ENCODE measurements at regions of chr12 and their contacts with region 1.

Region 1: DNA sequence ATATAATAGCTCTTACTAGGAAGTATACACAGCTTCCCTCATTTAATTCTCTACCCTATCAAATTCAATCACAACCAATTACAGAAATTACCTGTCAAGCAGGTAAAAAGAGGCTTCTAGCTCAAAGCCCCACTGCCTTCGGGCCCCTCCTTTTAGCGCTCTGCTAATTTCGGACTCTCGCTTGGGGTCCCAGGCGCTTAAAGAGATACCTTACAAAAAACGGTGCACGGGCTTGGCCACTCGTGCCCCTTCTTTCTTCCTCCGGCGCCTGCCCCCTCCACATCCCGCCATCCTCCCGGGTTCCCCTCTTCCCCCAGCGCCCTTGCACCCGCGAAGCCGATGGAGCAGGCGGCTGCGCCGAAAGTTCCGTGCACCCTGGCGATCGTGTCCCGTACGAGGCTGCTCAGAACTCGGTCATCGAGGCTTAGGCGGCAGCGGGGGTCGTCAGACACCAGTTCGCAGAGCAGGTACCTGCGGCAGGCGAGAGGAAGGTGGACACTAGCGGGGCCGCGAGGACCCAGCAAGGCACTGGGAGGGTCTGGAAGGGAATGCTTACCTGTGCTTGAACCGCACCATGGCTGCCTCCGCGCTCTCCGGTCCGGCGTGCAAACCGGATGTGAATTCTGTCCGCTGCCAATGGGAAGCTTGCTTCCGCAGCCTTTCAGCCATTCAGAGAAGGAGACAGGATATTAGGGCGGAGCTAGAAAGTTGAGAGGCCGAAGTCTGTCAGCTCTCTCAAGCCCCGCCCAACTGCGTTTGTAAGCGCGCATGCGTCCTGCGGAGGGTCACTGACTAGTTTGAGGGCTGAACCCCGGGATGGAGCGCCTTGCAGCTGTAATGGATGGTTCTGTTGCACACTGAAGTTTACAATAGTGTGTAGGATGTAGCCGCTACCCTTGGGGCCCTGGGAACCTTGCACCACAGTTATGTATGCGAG is at the start of gene POP5:
- DNase-seq: peak; percentile 96
- ATAC-seq: peak; percentile 97
- H3K4me3 ChIP-seq: peak within 1 kb of the TSS; percentile 58 to 99 (median 96)
- H3K4me3 Mint-ChIP-seq: peak within 1 kb of the TSS; percentile 98
- H3K27ac ChIP-seq: peak within 1 kb of the TSS; percentile 47 to 70
- H3K27ac Mint-ChIP-seq: peak within 1 kb of the TSS; percentile 93
- H3K4me1 ChIP-seq: peaks cover 28 to 37% of the 10 kb centered on the region in 2 donors
- H3K4me1 Mint-ChIP-seq: peaks cover 40% of the 10 kb centered on the region
- H3K27me3 ChIP-seq: peaks cover 0 to 24% (median 9%) of the 10 kb centered on the region in 4 experiments
- H3K27me3 Mint-ChIP-seq: peaks cover 10% of the 10 kb centered on the region
- CTCF ChIP-seq: no peak
- total RNA-seq, gene POP5: 60.6 and 61.4 TPM in 2 replicates

Region 2: GRCh38 chr12:119208622-119209061 is 1372.4 kb before region 1 on chr12:
- CTCF ChIA-PET with region 1: no interaction called
- POLR2A ChIA-PET with region 1: no interaction called
- intact Hi-C with region 1: no loop called
- DNase-seq: peak; percentile 3
- ATAC-seq: no peak
- H3K4me3 ChIP-seq: no peak overlapping the region
- H3K4me3 Mint-ChIP-seq: no peak overlapping the region
- H3K27ac ChIP-seq: no peak overlapping the region
- H3K27ac Mint-ChIP-seq: no peak overlapping the region
- H3K4me1 ChIP-seq: no peaks in the 10 kb centered on the region
- H3K4me1 Mint-ChIP-seq: no peaks in the 10 kb centered on the region
- H3K27me3 ChIP-seq: no peaks in the 10 kb centered on the region
- H3K27me3 Mint-ChIP-seq: peaks cover 3% of the 10 kb centered on the region
- CTCF ChIP-seq: no peak

Region 3: DNA sequence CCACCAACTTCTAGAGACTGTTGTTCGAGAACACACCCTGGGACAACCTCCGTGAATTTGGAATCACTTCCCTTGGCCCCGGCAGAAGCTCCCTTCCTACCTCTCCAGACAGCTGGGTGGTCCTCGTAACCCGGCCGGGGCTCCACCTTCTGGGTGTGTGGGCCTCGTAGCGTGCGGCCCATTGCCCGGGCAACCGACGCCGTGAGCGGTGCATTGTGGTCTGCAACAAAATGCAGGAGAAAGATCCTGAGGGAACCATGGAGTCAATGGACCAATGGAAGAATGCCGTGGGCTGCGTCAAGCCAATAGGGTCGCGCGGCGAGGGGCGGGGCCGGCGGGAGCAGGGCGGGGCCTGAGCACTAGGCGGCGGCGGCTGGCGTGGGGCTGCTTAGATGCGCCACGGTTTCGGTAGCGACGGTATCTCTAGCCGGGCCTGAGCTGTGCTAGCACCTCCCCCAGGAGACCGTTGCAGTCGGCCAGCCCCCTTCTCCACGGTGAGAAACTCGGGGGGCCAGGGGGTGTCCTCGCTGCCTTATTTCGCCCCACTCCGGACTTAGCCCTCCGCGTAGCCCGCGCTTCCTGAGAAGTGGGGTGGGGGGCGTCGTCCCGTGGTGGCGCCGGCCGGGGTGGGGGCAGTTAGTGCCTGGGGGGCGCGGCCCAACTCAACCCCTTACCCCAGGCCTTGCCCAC is 85.2 kb before region 1 on chr12 and contains the start of gene DYNLL1:
- CTCF ChIA-PET with region 1: no interaction called
- POLR2A ChIA-PET with region 1: no interaction called
- intact Hi-C with region 1: loop called (anchors 5 kb)
- DNase-seq: peak; percentile 99
- ATAC-seq: peak; percentile 95
- H3K4me3 ChIP-seq: peak within 1 kb of the TSS; percentile 68 to 90 (median 83)
- H3K4me3 Mint-ChIP-seq: peak within 1 kb of the TSS; percentile 98
- H3K27ac ChIP-seq: peak within 1 kb of the TSS; percentile 45 to 78
- H3K27ac Mint-ChIP-seq: peak within 1 kb of the TSS; percentile 93
- H3K4me1 ChIP-seq: peaks cover 17% of the 10 kb centered on the region in 2 donors
- H3K4me1 Mint-ChIP-seq: peaks cover 28% of the 10 kb centered on the region
- H3K27me3 ChIP-seq: no peaks in the 10 kb centered on the region
- H3K27me3 Mint-ChIP-seq: no peaks in the 10 kb centered on the region
- CTCF ChIP-seq: no peak
- total RNA-seq, gene DYNLL1: 132 and 138 TPM in 2 replicates

Region 4: DNA sequence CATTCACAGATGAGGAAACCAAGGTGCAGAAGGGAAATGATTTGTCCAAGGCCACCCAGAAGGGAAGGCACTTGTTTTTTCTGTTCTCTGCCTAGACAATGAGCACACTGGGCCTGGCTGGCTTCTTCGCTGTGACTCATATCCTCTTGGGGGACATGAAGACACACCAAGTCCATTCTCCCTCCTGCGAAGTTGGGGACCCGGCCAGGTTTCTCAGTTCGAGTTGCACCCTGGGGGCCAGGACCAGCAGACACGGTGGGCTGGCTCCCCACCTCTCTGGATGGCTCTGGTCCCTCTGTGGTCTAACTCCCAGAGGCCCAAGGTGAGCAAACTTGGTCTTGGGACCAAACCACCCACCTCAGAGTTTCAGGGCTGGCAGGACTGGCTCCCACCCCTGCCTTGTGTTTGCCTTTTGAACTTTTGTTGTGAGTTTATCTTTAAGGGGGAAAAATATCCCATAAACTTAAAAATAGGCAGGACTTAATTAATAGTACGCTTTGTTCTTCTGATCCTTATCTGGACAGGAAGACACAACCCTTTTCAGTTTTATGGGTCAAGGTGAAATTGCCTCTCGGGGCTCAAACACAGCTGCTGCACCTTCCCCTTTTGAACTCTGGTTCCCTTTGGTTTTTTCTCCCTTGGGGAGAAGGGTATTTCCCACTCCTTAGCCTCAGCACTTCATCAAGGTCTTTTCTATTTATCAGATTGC is 96.9 kb after region 1 on chr12:
- CTCF ChIA-PET with region 1: interaction called, 3 read pairs
- POLR2A ChIA-PET with region 1: interaction called, 11 read pairs
- intact Hi-C with region 1: no loop called
- DNase-seq: peak; percentile 62
- ATAC-seq: peak; percentile 53
- H3K4me3 ChIP-seq: no peak overlapping the region
- H3K4me3 Mint-ChIP-seq: peak overlapping the region; percentile 71
- H3K27ac ChIP-seq: peak overlapping the region in 1 of 2 donors; percentile 45
- H3K27ac Mint-ChIP-seq: peak overlapping the region; percentile 81
- H3K4me1 ChIP-seq: peaks cover 44 to 58% of the 10 kb centered on the region in 2 donors
- H3K4me1 Mint-ChIP-seq: peaks cover 44% of the 10 kb centered on the region
- H3K27me3 ChIP-seq: no peaks in the 10 kb centered on the region
- H3K27me3 Mint-ChIP-seq: no peaks in the 10 kb centered on the region
- CTCF ChIP-seq: no peak

Region 5: GRCh38 chr12:120761519-120761934 is 180.5 kb after region 1 on chr12:
- CTCF ChIA-PET with region 1: no interaction called
- POLR2A ChIA-PET with region 1: no interaction called
- intact Hi-C with region 1: no loop called
- DNase-seq: no peak
- ATAC-seq: no peak
- H3K4me3 ChIP-seq: no peak overlapping the region
- H3K4me3 Mint-ChIP-seq: no peak overlapping the region
- H3K27ac ChIP-seq: no peak overlapping the region
- H3K27ac Mint-ChIP-seq: no peak overlapping the region
- H3K4me1 ChIP-seq: no peaks in the 10 kb centered on the region
- H3K4me1 Mint-ChIP-seq: no peaks in the 10 kb centered on the region
- H3K27me3 ChIP-seq: no peaks in the 10 kb centered on the region
- H3K27me3 Mint-ChIP-seq: no peaks in the 10 kb centered on the region
- CTCF ChIP-seq: no peak

Region 6: DNA sequence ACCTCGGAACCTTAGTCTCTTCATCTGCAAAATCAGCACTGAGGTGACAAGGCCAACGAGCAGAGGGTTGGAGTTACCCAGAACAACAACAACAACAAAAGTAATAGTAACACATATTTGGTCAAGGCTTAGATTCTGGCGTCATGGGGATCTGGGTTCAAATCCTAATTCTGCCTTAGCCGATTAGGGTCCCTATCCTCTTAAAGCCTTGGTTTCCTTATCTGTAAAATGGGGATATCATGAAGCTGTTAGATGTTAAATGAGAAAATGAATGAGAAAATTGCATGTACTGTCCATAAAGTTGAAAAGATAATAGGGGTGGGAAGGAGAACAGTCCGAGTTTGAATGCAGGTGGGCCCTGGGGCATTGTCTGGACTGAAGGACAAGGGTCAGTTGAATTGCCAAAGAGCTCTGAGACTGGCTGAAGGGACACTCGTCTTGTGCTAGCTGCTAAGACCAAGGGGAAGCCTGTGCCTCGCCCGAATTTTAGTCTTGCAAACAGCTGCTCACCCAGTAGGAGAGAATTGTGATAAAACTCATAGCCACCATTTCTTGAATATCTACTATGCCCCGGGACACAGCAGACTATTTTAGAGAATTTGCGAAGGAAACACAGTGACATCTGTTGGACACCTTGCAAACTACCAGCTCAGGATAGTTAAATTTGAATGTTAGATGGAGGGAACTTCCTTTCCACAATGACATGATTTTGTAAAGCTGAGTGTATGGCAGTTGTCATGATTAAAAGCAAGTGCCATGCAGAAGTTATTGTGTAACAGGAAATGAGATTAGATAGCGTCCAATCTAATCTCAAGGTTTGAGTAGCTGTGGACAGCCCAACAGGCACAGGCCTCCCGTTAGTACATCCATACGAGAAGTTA is 390.5 kb after region 1 on chr12:
- CTCF ChIA-PET with region 1: interaction called, 60 read pairs
- POLR2A ChIA-PET with region 1: no interaction called
- intact Hi-C with region 1: no loop called
- DNase-seq: peak; percentile 78
- ATAC-seq: peak; percentile 88
- H3K4me3 ChIP-seq: no peak overlapping the region
- H3K4me3 Mint-ChIP-seq: no peak overlapping the region
- H3K27ac ChIP-seq: no peak overlapping the region
- H3K27ac Mint-ChIP-seq: peak overlapping the region; percentile 42
- H3K4me1 ChIP-seq: peaks cover 3 to 6% of the 10 kb centered on the region in 2 donors
- H3K4me1 Mint-ChIP-seq: peaks cover 6% of the 10 kb centered on the region
- H3K27me3 ChIP-seq: peaks cover 0 to 2% (median 0%) of the 10 kb centered on the region in 4 experiments
- H3K27me3 Mint-ChIP-seq: peaks cover 4% of the 10 kb centered on the region
- CTCF ChIP-seq: peak; percentile 80

Region 7: DNA sequence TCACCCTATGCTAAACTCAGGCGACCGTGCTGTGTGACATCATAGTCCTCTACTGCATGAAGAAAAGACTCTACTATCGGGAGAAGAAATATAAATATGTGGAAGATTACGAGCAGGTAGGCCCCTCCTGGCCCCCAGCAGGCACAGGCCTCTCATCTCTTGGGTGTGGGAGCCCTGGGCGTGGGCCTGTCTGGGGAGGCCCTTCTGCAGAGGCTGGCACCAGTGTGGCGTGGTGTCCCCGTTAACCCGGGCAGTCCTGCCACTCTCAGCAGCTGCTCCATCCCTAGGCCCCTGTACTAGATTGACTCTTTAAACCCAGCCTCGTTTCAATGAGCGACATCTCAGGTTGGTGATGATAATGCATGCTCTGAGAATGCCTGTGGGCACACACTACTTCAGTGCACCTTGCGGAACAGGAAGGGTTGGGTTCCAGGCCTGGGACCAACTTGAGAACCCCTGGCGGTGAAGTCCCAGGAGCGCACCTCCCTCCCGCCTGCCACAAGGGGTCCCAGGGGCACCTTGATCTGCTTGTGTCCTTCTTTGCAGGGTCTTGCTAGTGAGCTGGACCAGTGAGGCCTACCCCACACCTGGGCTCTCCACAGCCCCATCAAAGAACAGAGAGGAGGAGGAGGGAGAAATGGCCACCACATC is 652.0 kb after region 1 on chr12:
- CTCF ChIA-PET with region 1: no interaction called
- POLR2A ChIA-PET with region 1: no interaction called
- intact Hi-C with region 1: loop called (anchors 5 kb)
- DNase-seq: no peak
- ATAC-seq: no peak
- H3K4me3 ChIP-seq: no peak overlapping the region
- H3K4me3 Mint-ChIP-seq: no peak overlapping the region
- H3K27ac ChIP-seq: no peak overlapping the region
- H3K27ac Mint-ChIP-seq: no peak overlapping the region
- H3K4me1 ChIP-seq: no peaks in the 10 kb centered on the region
- H3K4me1 Mint-ChIP-seq: peaks cover 6% of the 10 kb centered on the region
- H3K27me3 ChIP-seq: no peaks in the 10 kb centered on the region
- H3K27me3 Mint-ChIP-seq: no peaks in the 10 kb centered on the region
- CTCF ChIP-seq: no peak

Measured in B cell (primary cell).